GM12878 (cell line): ENCODE measurements at regions of chr10 and their contacts with region 1.

Region 1: DNA sequence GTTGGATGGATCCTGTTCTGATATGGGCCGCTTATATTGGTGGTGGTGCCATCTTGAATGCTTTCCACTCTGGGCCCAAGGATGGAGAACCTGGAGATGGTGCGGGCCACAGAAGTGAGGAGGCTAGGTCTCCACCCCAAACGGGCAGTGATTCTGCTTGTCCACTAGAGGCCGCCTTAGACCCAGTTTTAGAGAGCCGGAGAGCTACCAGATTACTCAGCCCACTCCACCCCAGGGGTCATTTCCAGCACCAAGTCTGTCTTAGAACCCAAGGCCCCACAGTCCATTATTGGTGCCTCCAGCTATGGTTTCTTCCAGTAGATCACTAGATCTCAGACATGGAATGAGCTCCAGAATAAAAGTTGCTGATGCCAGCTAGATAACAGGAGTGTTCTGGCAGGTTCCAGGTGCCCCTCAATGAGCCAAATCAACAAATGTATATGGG is 11.8 kb upstream of the CAMK2G start:
- DNase-seq: no peak
- ATAC-seq: peak; percentile 93
- H3K4me3 ChIP-seq: no peak overlapping the region
- H3K27ac ChIP-seq: no peak overlapping the region
- H3K4me1 ChIP-seq: peaks cover 6% of the 10 kb centered on the region
- H3K27me3 ChIP-seq: no peaks in the 10 kb centered on the region
- CTCF ChIP-seq: peak; percentile 89 to 94 (median 90)
- EP300 ChIP-seq: no peak
- POLR2A ChIP-seq: no peak
- RAD21 ChIP-seq: peak; percentile 94

Region 2: GRCh38 chr10:73908853-73909538 is 22.9 kb after region 1 on chr10:
- CTCF ChIA-PET with region 1: interaction called, 18 read pairs
- POLR2A ChIA-PET with region 1: interaction called, 4 read pairs
- RAD21 ChIA-PET with region 1: interaction called, 54 read pairs
- SMC1A ChIA-PET with region 1: interaction called, 1,048 read pairs
- in situ Hi-C with region 1: no loop called
- intact Hi-C with region 1: loop called (anchors 2 kb)
- DNase-seq: peak; percentile 63
- ATAC-seq: peak; percentile 70
- H3K4me3 ChIP-seq: no peak overlapping the region
- H3K27ac ChIP-seq: no peak overlapping the region
- H3K4me1 ChIP-seq: peaks cover 18% of the 10 kb centered on the region
- H3K27me3 ChIP-seq: peaks cover 0 to 7% of the 10 kb centered on the region in 2 experiments; a peak in 3 of 4 replicates
- CTCF ChIP-seq: no peak
- EP300 ChIP-seq: peak; percentile 21 to 37; a peak in 1 of 4 replicates
- POLR2A ChIP-seq: no peak
- RAD21 ChIP-seq: no peak

Region 3: GRCh38 chr10:74035303-74035702 is 149.2 kb after region 1 on chr10:
- CTCF ChIA-PET with region 1: interaction called, 15 read pairs
- POLR2A ChIA-PET with region 1: interaction called, 3 read pairs
- RAD21 ChIA-PET with region 1: interaction called, 6 read pairs
- SMC1A ChIA-PET with region 1: interaction called, 11 read pairs
- in situ Hi-C with region 1: no loop called
- intact Hi-C with region 1: no loop called
- DNase-seq: no peak
- ATAC-seq: no peak
- H3K4me3 ChIP-seq: no peak overlapping the region
- H3K27ac ChIP-seq: no peak overlapping the region
- H3K4me1 ChIP-seq: peaks cover 11% of the 10 kb centered on the region
- H3K27me3 ChIP-seq: no peaks in the 10 kb centered on the region
- CTCF ChIP-seq: peak in 1 of 3 experiments; percentile 14; a peak in 2 of 6 replicates
- EP300 ChIP-seq: no peak
- POLR2A ChIP-seq: no peak
- RAD21 ChIP-seq: peak; percentile 46; the same call in 1 of the 2 replicates

Region 4: GRCh38 chr10:74081192-74081803 is 195.2 kb after region 1 on chr10:
- CTCF ChIA-PET with region 1: interaction called, 154 read pairs
- POLR2A ChIA-PET with region 1: interaction called, 4 read pairs
- RAD21 ChIA-PET with region 1: interaction called, 105 read pairs
- SMC1A ChIA-PET with region 1: interaction called, 160 read pairs
- in situ Hi-C with region 1: loop called (anchors 25 kb)
- intact Hi-C with region 1: loop called (anchors 1 kb)
- DNase-seq: no peak
- ATAC-seq: peak; percentile 37; the same call in 2 of the 3 replicates
- H3K4me3 ChIP-seq: no peak overlapping the region
- H3K27ac ChIP-seq: no peak overlapping the region
- H3K4me1 ChIP-seq: peaks cover 36% of the 10 kb centered on the region
- H3K27me3 ChIP-seq: no peaks in the 10 kb centered on the region
- CTCF ChIP-seq: peak; percentile 70 to 77 (median 71)
- EP300 ChIP-seq: no peak
- POLR2A ChIP-seq: no peak
- RAD21 ChIP-seq: peak; percentile 83

Region 5: DNA sequence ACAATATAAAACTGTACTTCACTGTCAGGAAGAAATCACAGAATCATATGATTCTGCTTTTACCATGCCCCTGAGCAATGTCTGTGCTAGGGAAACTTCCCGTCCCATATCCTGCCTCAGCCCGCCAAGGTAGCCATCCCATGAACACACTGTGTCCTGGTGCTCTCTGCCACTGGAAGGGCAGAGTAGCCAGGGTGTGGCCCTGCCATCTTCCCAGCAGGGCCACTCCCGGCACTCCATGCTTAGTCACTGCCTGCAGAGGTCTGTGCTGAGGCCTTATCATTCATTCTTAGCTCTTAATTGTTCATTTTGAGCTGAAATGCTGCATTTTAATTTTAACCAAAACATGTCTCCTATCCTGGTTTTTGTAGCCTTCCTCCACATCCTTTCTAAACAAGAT is 232.7 kb after region 1 on chr10:
- CTCF ChIA-PET with region 1: interaction called, 3 read pairs
- POLR2A ChIA-PET with region 1: interaction called, 4 read pairs
- RAD21 ChIA-PET with region 1: interaction called, 5 read pairs
- SMC1A ChIA-PET with region 1: interaction called, 12 read pairs
- in situ Hi-C with region 1: no loop called
- intact Hi-C with region 1: no loop called
- DNase-seq: no peak
- ATAC-seq: no peak
- H3K4me3 ChIP-seq: no peak overlapping the region
- H3K27ac ChIP-seq: no peak overlapping the region
- H3K4me1 ChIP-seq: peaks cover 10% of the 10 kb centered on the region
- H3K27me3 ChIP-seq: no peaks in the 10 kb centered on the region
- CTCF ChIP-seq: no peak
- EP300 ChIP-seq: no peak
- POLR2A ChIP-seq: no peak
- RAD21 ChIP-seq: no peak